ENCODE measurements at regions of chr16 and their contacts with region 1.

Region 1: GRCh38 chr16:30887927-30888326 is 6.0 kb downstream of the BCL7C start:
- DNase-seq: no peak
- H3K4me3 ChIP-seq: no peak overlapping the region
- H3K27ac ChIP-seq: no peak overlapping the region
- H3K4me1 ChIP-seq: peaks cover 0 to 8% (median 7%) of the 10 kb centered on the region in 4 donors
- H3K27me3 ChIP-seq: no peaks in the 10 kb centered on the region
- CTCF ChIP-seq: no peak
- EP300 ChIP-seq: no peak
- POLR2A ChIP-seq: no peak

Region 2: DNA sequence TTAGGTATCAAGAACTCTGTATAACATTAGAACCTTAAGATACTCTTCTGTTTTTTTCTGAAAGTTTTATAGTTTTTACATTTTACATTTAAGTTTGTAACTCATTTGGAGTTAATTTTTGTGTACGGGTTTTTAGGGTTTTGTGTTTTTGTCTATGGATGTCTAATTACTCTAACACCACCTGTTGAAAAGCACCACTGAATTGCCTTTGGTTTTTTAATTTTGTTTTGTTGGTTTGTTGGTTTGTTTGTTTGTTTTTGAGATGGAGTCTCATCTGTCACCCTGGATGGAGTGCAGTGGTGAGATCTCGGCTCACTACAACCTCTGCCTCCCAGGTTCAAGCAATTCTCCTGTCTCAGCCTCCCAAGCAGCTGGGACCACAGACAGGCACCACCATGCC is 71.2 kb before region 1 on chr16:
- intact Hi-C with region 1: loop called (anchors 2 kb)
- DNase-seq: no peak
- H3K4me3 ChIP-seq: no peak overlapping the region
- H3K27ac ChIP-seq: no peak overlapping the region
- H3K4me1 ChIP-seq: peaks cover 0 to 12% (median 4%) of the 10 kb centered on the region in 4 donors
- H3K27me3 ChIP-seq: no peaks in the 10 kb centered on the region
- CTCF ChIP-seq: no peak
- EP300 ChIP-seq: no peak
- POLR2A ChIP-seq: no peak